Heart right ventricle (tissue), 16 donors: ENCODE measurements at regions of chr1 and their contacts with region 1.

Region 1: GRCh38 chr1:221284028-221284427 is 404.8 kb downstream of the HLX start:
- DNase-seq: no peak
- ATAC-seq: no peak
- H3K4me3 ChIP-seq: no peak overlapping the region
- H3K27ac ChIP-seq: no peak overlapping the region
- H3K4me1 ChIP-seq: peaks cover 0 to 7% (median 0%) of the 10 kb centered on the region in 9 donors
- H3K27me3 ChIP-seq: no peaks in the 10 kb centered on the region
- CTCF ChIP-seq: no peak

Region 2: DNA sequence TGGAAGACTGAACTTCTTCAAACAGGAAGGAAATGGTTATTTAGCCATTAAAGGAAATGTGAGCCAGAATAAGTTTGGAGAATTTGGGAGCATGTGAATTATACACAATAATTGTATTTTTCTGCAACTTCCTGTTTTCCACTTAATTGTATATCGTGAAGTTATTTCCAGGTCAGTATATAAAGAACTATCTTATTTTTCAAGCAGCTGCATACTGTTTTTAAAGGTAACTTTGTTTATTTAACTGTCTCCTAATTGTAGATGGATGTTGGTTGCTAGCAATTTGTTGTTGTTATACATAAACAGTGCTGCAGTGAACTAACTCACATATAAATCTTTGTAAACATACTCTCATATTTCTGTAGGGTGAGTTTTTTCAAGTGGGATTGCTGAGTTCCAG is 224.5 kb before region 1 on chr1:
- intact Hi-C with region 1: no loop called
- DNase-seq: no peak
- ATAC-seq: no peak
- H3K4me3 ChIP-seq: no peak overlapping the region
- H3K27ac ChIP-seq: no peak overlapping the region
- H3K4me1 ChIP-seq: peaks cover 0 to 4% (median 0%) of the 10 kb centered on the region in 9 donors
- H3K27me3 ChIP-seq: no peaks in the 10 kb centered on the region
- CTCF ChIP-seq: no peak

Region 3: DNA sequence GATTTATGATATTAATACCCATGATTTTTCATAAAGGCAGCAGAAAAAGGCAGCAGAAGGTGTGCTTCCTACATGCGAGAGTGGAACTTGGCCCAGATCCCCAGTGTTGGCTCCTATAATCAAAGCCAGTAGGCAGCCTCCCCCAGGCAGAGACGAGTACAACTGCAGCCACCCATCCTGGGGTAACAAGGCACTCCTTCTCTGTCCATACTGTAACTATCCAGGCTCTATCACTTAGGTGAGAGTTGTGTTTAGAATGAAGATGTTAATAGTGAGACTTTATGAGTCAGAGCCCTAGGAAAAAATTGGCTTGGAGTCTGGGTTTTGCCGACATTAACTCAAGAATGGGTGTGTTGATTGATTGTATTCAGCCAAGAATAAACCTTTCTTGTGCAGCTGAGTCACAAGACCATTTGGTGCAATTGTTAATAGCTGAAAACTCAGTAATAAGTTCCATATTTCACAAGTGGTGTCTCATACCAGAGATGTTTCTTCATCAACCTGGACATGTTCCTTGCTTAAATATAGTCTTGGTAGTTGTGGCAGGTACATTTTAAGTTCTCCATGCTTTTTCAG is 135.6 kb after region 1 on chr1:
- intact Hi-C with region 1: loop called in 1 of 10 experiments (anchors 10 kb)
- DNase-seq: no peak
- ATAC-seq: peak in 1 of 8 donors; percentile 55
- H3K4me3 ChIP-seq: no peak overlapping the region
- H3K27ac ChIP-seq: no peak overlapping the region
- H3K4me1 ChIP-seq: peaks cover 0 to 12% (median 0%) of the 10 kb centered on the region in 9 donors
- H3K27me3 ChIP-seq: peaks cover 0 to 3% (median 0%) of the 10 kb centered on the region in 7 donors
- CTCF ChIP-seq: no peak